ENCODE measurements at regions of chr10 and their contacts with region 1.

Region 1: GRCh38 chr10:33150889-33151288 is 183.6 kb downstream of the NRP1 start:
- DNase-seq: peak; percentile 61 to 79 (median 73)
- H3K4me3 ChIP-seq: peak overlapping the region in 1 of 2 donors; percentile 2
- H3K4me3 Mint-ChIP-seq: peak overlapping the region in 7 of 8 donors; percentile 52 to 82 (median 69)
- H3K27ac ChIP-seq: peak overlapping the region; percentile 64
- H3K27ac Mint-ChIP-seq: peak overlapping the region; percentile 91 to 99 (median 98)
- H3K4me1 ChIP-seq: peaks cover 62% of the 10 kb centered on the region
- H3K4me1 Mint-ChIP-seq: peaks cover 53 to 80% (median 67%) of the 10 kb centered on the region in 4 donors
- H3K27me3 ChIP-seq: no peaks in the 10 kb centered on the region
- H3K27me3 Mint-ChIP-seq: no peaks in the 10 kb centered on the region

Region 2: DNA sequence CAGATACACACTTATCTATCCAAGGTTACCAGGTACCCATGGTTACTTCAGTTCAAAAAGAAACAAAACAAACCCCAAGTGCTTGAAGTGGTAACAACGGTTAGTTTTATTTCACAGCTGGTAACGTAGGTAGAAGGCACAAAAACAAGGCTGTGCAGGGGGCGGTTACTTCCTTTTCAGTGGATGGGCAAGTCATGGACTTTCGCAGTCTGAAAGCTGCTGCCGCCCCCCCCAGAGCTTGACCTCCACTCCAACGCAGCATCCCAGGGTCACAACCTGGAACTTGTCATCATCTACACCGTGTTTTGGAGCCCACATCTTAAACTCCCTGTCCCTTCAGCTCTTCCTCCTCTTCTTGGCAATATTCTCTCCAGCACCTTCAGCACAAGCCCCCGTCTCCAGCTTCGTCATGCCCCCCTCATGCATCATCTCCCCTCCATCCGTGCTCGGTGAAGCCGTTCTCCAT is 11.7 kb before region 1 on chr10:
- CTCF ChIA-PET with region 1: interaction called, 102 read pairs
- POLR2A ChIA-PET with region 1: interaction called, 2,213 read pairs
- intact Hi-C with region 1: loop called (anchors 1 kb)
- DNase-seq: peak; percentile 94 to 97 (median 95)
- H3K4me3 ChIP-seq: peak overlapping the region; percentile 10 to 54
- H3K4me3 Mint-ChIP-seq: peak overlapping the region; percentile 57 to 81 (median 75)
- H3K27ac ChIP-seq: peak overlapping the region; percentile 84
- H3K27ac Mint-ChIP-seq: peak overlapping the region; percentile 98 to 100 (median 100)
- H3K4me1 ChIP-seq: peaks cover 92% of the 10 kb centered on the region
- H3K4me1 Mint-ChIP-seq: peaks cover 63 to 93% (median 80%) of the 10 kb centered on the region in 4 donors
- H3K27me3 ChIP-seq: no peaks in the 10 kb centered on the region
- H3K27me3 Mint-ChIP-seq: no peaks in the 10 kb centered on the region

Region 3: DNA sequence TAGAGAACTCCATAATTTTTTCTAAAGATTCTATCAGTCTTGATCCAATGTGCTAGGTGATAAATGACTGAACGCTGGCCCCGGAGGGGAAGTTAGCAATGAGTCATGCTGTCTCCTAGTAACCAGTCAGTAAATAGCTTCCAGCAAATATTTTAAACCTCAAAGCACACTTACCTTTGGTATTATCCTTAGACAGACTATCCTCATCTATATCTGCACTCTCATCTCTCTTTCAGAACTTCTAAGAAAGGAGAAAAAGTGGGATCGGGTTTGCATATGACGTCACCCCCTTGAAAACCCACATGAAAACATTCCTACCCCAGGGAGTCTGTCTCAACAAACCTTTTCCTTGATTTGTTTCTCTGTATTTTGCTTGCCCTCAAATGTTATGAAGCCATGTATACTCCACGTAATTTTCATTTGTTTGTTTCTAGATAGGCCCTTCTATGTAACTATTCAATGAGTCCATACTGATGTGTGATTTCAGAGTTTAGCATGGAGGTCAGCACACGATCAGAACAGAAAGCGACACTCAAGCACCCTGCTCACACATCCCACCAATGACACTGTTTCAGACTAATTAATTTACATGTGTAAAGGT is 358.4 kb after region 1 on chr10:
- CTCF ChIA-PET with region 1: no interaction called
- POLR2A ChIA-PET with region 1: no interaction called
- intact Hi-C with region 1: no loop called
- DNase-seq: no peak
- H3K4me3 ChIP-seq: no peak overlapping the region
- H3K4me3 Mint-ChIP-seq: no peak overlapping the region
- H3K27ac ChIP-seq: no peak overlapping the region
- H3K27ac Mint-ChIP-seq: no peak overlapping the region
- H3K4me1 ChIP-seq: no peaks in the 10 kb centered on the region
- H3K4me1 Mint-ChIP-seq: peaks cover 0 to 8% (median 3%) of the 10 kb centered on the region in 4 donors
- H3K27me3 ChIP-seq: no peaks in the 10 kb centered on the region
- H3K27me3 Mint-ChIP-seq: peaks cover 5 to 12% of the 10 kb centered on the region in 2 donors